ENCODE measurements at regions of chrX and their contacts with region 1.

Region 1: DNA sequence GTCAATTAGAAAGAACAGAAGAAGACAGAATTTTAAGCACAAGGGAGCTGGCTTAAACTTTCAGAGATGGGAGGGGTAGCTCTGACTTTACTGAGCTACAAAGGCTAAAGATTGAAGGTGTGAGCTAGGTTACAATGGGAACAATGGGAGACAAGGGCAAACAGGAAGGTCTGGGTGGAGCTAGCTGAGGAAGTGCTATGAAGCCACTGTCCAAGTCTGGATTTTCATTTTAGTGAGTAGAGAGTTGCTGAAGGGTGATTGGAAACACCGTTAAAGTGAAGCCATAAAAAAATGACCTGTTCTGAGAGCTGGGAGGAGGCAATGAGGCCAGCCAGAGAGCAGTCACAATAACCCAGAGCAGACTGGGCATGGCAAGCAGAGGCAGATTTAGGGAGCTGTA is 104.3 kb upstream of the CITED1 start:
- DNase-seq: no peak
- ATAC-seq: no peak
- H3K4me3 ChIP-seq: no peak overlapping the region
- H3K27ac ChIP-seq: no peak overlapping the region
- H3K4me1 ChIP-seq: no peaks in the 10 kb centered on the region
- H3K27me3 ChIP-seq: peaks cover 1% of the 10 kb centered on the region; the same call in 1 of the 2 replicates
- CTCF ChIP-seq: no peak
- POLR2A ChIP-seq: no peak
- RAD21 ChIP-seq: no peak

Region 2: GRCh38 chrX:72351606-72352334 is 58.2 kb before region 1 on chrX:
- CTCF ChIA-PET with region 1: no interaction called
- POLR2A ChIA-PET with region 1: no interaction called
- dilution Hi-C with region 1: no loop called
- in situ Hi-C with region 1: loop called (anchors 10 kb)
- intact Hi-C with region 1: no loop called
- DNase-seq: no peak
- ATAC-seq: no peak
- H3K4me3 ChIP-seq: no peak overlapping the region
- H3K27ac ChIP-seq: no peak overlapping the region
- H3K4me1 ChIP-seq: peaks cover 3% of the 10 kb centered on the region
- H3K27me3 ChIP-seq: peaks cover 18% of the 10 kb centered on the region
- CTCF ChIP-seq: no peak
- POLR2A ChIP-seq: no peak
- RAD21 ChIP-seq: no peak

Measured in IMR-90 (cell line).